Mammary epithelial cell (primary cell): ENCODE measurements at regions of chr9 and their contacts with region 1.

Region 1: GRCh38 chr9:33044677-33045282 is 19.7 kb downstream of the DNAJA1 start:
- DNase-seq: peak; percentile 34
- H3K4me3 ChIP-seq: peak overlapping the region; percentile 59 to 64 (median 64)
- H3K27ac ChIP-seq: peak overlapping the region; percentile 72
- H3K4me1 ChIP-seq: peaks cover 16% of the 10 kb centered on the region
- H3K27me3 ChIP-seq: no peaks in the 10 kb centered on the region
- CTCF ChIP-seq: peak in 1 of 2 donors; percentile 39

Region 2: GRCh38 chr9:33130508-33130911 is 85.7 kb after region 1 on chr9:
- CTCF ChIA-PET with region 1: no interaction called
- dilution Hi-C with region 1: loop called (anchors 5 kb)
- in situ Hi-C with region 1: no loop called
- intact Hi-C with region 1: no loop called
- DNase-seq: peak; percentile 53
- H3K4me3 ChIP-seq: no peak overlapping the region
- H3K27ac ChIP-seq: peak overlapping the region; percentile 14
- H3K4me1 ChIP-seq: peaks cover 28% of the 10 kb centered on the region
- H3K27me3 ChIP-seq: no peaks in the 10 kb centered on the region
- CTCF ChIP-seq: no peak